ENCODE measurements at regions of chr10 and their contacts with region 1.

Region 1: GRCh38 chr10:17375936-17376584 is 78.3 kb downstream of the ST8SIA6 start:
- H3K4me3 ChIP-seq: no peak overlapping the region
- H3K27ac ChIP-seq: no peak overlapping the region
- H3K4me1 ChIP-seq: no peaks in the 10 kb centered on the region
- CTCF ChIP-seq: no peak

Region 2: GRCh38 chr10:17290226-17290625 is 85.8 kb before region 1 on chr10:
- CTCF ChIA-PET with region 1: interaction called, 17 read pairs
- POLR2A ChIA-PET with region 1: no interaction called
- H3K4me3 ChIP-seq: no peak overlapping the region
- H3K27ac ChIP-seq: no peak overlapping the region
- H3K4me1 ChIP-seq: no peaks in the 10 kb centered on the region
- CTCF ChIP-seq: peak; percentile 64

Region 3: DNA sequence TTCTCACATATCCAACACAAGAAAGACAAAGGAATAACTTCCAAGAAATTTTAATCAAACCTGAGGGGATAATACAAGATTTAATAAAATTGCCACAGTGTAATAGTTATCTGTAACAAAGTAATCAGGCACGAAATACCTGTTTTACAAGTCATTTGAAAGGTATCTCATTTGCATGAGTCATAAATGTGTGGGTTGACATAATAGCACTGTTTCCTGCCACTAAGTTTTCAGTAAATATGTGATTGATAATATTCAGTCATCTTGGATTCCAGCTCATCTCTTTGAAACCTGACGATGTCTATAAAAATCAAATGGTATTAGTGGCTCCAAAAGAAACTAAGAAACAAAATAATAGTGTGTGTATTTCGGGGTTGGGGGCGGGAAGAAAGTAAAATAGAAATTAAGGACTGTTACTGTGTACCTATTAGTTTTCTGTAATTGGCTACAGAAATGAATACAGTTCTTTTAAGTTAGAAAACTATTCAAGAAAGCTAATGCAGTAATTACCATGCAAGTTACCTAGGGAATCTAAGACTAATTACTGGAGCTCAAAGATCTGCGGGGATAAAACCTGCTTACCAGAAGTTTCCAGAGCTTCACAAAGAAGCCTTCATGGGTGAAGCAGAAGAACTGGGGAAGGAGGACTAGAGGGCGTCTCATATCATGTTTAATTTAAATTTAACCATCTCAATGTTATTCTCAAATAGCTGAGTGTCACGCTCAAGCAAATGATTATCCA is 22.3 kb before region 1 on chr10:
- CTCF ChIA-PET with region 1: interaction called, 15 read pairs
- POLR2A ChIA-PET with region 1: no interaction called
- H3K4me3 ChIP-seq: no peak overlapping the region
- H3K27ac ChIP-seq: no peak overlapping the region
- H3K4me1 ChIP-seq: no peaks in the 10 kb centered on the region
- CTCF ChIP-seq: no peak

Region 4: GRCh38 chr10:17365402-17365801 is 10.7 kb before region 1 on chr10:
- CTCF ChIA-PET with region 1: interaction called, 34 read pairs
- POLR2A ChIA-PET with region 1: no interaction called
- H3K4me3 ChIP-seq: no peak overlapping the region
- H3K27ac ChIP-seq: no peak overlapping the region
- H3K4me1 ChIP-seq: no peaks in the 10 kb centered on the region
- CTCF ChIP-seq: no peak

Region 5: GRCh38 chr10:17386616-17387075 is 10.6 kb after region 1 on chr10:
- CTCF ChIA-PET with region 1: interaction called, 19 read pairs
- POLR2A ChIA-PET with region 1: no interaction called
- H3K4me3 ChIP-seq: no peak overlapping the region
- H3K27ac ChIP-seq: no peak overlapping the region
- H3K4me1 ChIP-seq: no peaks in the 10 kb centered on the region
- CTCF ChIP-seq: no peak

Measured in HEK293 (cell line).